ENCODE measurements at regions of chr19 and their contacts with region 1.

Region 1: GRCh38 chr19:47035127-47036096 is 13.0 kb downstream of the TMEM160 start:
- DNase-seq: peak; percentile 73
- ATAC-seq: peak; percentile 99
- H3K4me3 ChIP-seq: peak overlapping the region; percentile 49
- H3K27ac ChIP-seq: no peak overlapping the region
- H3K4me1 ChIP-seq: peaks cover 2% of the 10 kb centered on the region
- H3K27me3 ChIP-seq: no peaks in the 10 kb centered on the region
- CTCF ChIP-seq: peak; percentile 91
- POLR2A ChIP-seq: no peak
- RAD21 ChIP-seq: peak; percentile 63

Region 2: GRCh38 chr19:46600384-46601317 is 434.8 kb before region 1 on chr19:
- CTCF ChIA-PET with region 1: no interaction called
- POLR2A ChIA-PET with region 1: interaction called, 14 read pairs
- dilution Hi-C with region 1: no loop called
- in situ Hi-C with region 1: no loop called
- intact Hi-C with region 1: no loop called
- DNase-seq: peak; percentile 97
- ATAC-seq: peak; percentile 92
- H3K4me3 ChIP-seq: peak overlapping the region; percentile 87
- H3K27ac ChIP-seq: peak overlapping the region; percentile 91
- H3K4me1 ChIP-seq: peaks cover 15% of the 10 kb centered on the region
- H3K27me3 ChIP-seq: no peaks in the 10 kb centered on the region
- CTCF ChIP-seq: no peak
- POLR2A ChIP-seq: peak; percentile 52
- RAD21 ChIP-seq: no peak

Region 3: DNA sequence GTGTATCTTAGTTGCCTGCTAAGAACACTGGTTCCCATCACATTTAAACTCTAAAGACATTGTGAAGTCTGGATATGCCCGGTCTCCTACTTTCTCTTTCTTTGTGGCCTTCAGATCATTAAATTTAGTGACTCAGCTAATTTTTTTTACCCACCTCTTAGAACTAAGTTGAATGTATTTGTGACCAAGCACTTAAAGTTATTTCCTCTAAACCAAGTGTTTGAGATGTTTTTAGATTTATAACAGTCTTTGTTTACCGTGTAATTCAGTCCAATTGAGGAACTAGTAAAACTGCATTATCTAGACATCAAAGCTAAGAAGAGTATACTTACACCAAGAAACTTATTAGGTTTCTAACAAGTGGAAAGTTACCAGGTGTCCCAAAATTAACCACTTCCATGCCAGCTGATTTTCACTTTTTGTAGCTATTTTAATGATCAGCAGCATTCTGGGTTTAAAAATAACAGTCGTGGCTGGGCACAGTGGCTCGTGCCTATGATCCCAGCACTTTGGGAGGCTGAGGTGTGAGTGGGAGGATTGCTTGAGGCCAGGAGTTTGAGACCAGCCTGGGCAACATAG is 121.5 kb before region 1 on chr19:
- CTCF ChIA-PET with region 1: no interaction called
- POLR2A ChIA-PET with region 1: no interaction called
- dilution Hi-C with region 1: no loop called
- in situ Hi-C with region 1: no loop called
- intact Hi-C with region 1: no loop called
- DNase-seq: peak; percentile 49
- ATAC-seq: peak; percentile 42
- H3K4me3 ChIP-seq: no peak overlapping the region; the same call in 1 of the 2 replicates
- H3K27ac ChIP-seq: no peak overlapping the region
- H3K4me1 ChIP-seq: peaks cover 12% of the 10 kb centered on the region
- H3K27me3 ChIP-seq: no peaks in the 10 kb centered on the region
- CTCF ChIP-seq: no peak
- POLR2A ChIP-seq: no peak
- RAD21 ChIP-seq: no peak

Region 4: GRCh38 chr19:46990991-46991676 is 44.3 kb before region 1 on chr19:
- CTCF ChIA-PET with region 1: no interaction called
- POLR2A ChIA-PET with region 1: no interaction called
- dilution Hi-C with region 1: no loop called
- in situ Hi-C with region 1: no loop called
- intact Hi-C with region 1: no loop called
- DNase-seq: peak; percentile 81
- ATAC-seq: peak; percentile 95
- H3K4me3 ChIP-seq: no peak overlapping the region
- H3K27ac ChIP-seq: no peak overlapping the region
- H3K4me1 ChIP-seq: no peaks in the 10 kb centered on the region
- H3K27me3 ChIP-seq: no peaks in the 10 kb centered on the region
- CTCF ChIP-seq: peak; percentile 95
- POLR2A ChIP-seq: no peak
- RAD21 ChIP-seq: peak; percentile 98

Region 5: GRCh38 chr19:47005873-47006272 is 29.5 kb before region 1 on chr19:
- CTCF ChIA-PET with region 1: no interaction called
- POLR2A ChIA-PET with region 1: no interaction called
- dilution Hi-C with region 1: no loop called
- in situ Hi-C with region 1: no loop called
- intact Hi-C with region 1: no loop called
- DNase-seq: no peak
- ATAC-seq: no peak
- H3K4me3 ChIP-seq: no peak overlapping the region
- H3K27ac ChIP-seq: no peak overlapping the region
- H3K4me1 ChIP-seq: peaks cover 4% of the 10 kb centered on the region; the same call in 1 of the 2 replicates
- H3K27me3 ChIP-seq: no peaks in the 10 kb centered on the region
- CTCF ChIP-seq: no peak
- POLR2A ChIP-seq: no peak
- RAD21 ChIP-seq: no peak

Region 6: GRCh38 chr19:47112997-47113849 is 77.8 kb after region 1 on chr19 and contains the start of gene ZC3H4:
- CTCF ChIA-PET with region 1: no interaction called
- POLR2A ChIA-PET with region 1: no interaction called
- dilution Hi-C with region 1: no loop called
- in situ Hi-C with region 1: no loop called
- intact Hi-C with region 1: loop called (anchors 5 kb)
- DNase-seq: peak; percentile 99
- ATAC-seq: peak; percentile 87
- H3K4me3 ChIP-seq: peak within 1 kb of the TSS; percentile 77
- H3K27ac ChIP-seq: peak within 1 kb of the TSS; percentile 96
- H3K4me1 ChIP-seq: peaks cover 7% of the 10 kb centered on the region
- H3K27me3 ChIP-seq: no peaks in the 10 kb centered on the region
- CTCF ChIP-seq: no peak
- POLR2A ChIP-seq: peak; percentile 96
- RAD21 ChIP-seq: no peak
- total RNA-seq, gene ZC3H4: 3.9 and 5.3 TPM in 2 replicates

Region 7: GRCh38 chr19:47124937-47125668 is 89.7 kb after region 1 on chr19:
- CTCF ChIA-PET with region 1: interaction called, 7 read pairs
- POLR2A ChIA-PET with region 1: no interaction called
- dilution Hi-C with region 1: no loop called
- in situ Hi-C with region 1: no loop called
- intact Hi-C with region 1: loop called (anchors 1 kb)
- DNase-seq: peak; percentile 78
- ATAC-seq: peak; percentile 71
- H3K4me3 ChIP-seq: no peak overlapping the region
- H3K27ac ChIP-seq: no peak overlapping the region
- H3K4me1 ChIP-seq: peaks cover 5% of the 10 kb centered on the region
- H3K27me3 ChIP-seq: no peaks in the 10 kb centered on the region
- CTCF ChIP-seq: peak; percentile 83
- POLR2A ChIP-seq: no peak
- RAD21 ChIP-seq: peak; percentile 76

Measured in IMR-90 (cell line).